ENCODE measurements at regions of chr10 and their contacts with region 1.

Region 1: DNA sequence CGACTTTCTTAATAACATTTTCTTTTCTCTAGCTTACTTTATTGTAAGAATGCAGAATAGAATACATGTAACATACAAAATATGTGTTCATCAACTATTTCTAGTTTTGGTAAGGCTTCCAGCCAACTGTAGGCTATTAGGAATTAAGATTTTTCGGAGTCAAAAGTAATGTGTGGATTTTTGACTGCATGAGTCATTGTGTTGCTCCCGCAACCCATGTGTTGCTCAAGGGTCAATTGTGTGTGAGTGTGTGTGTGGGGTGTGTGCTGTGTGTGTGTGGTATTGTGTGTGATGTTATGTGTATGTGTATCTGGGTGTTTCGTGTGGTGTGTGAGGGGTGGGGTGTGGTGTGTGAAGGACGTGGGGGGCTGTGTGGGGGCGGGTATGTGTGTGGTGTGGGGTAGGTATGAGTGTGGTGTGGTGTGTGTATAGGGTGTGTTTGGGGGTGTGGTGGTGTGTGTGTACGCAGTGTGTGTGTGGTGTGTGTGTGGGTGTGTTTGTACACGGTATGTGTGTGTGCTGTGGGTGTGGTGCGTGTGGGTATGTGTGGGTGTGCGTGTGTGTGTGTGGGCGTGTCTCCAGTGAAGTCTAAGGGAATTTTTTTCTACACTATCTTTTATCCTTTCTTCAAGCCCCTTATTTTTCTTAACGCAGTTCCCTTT is 60.5 kb downstream of the RSU1 start:
- DNase-seq: no peak
- ATAC-seq: no peak
- H3K4me3 ChIP-seq: no peak overlapping the region
- H3K27ac ChIP-seq: no peak overlapping the region
- H3K4me1 ChIP-seq: no peaks in the 10 kb centered on the region
- H3K27me3 ChIP-seq: no peaks in the 10 kb centered on the region
- CTCF ChIP-seq: no peak

Region 2: GRCh38 chr10:16686054-16686902 is 70.4 kb before region 1 on chr10:
- CTCF ChIA-PET with region 1: no interaction called
- POLR2A ChIA-PET with region 1: no interaction called
- intact Hi-C with region 1: no loop called
- DNase-seq: no peak
- ATAC-seq: no peak
- H3K4me3 ChIP-seq: no peak overlapping the region
- H3K27ac ChIP-seq: no peak overlapping the region
- H3K4me1 ChIP-seq: no peaks in the 10 kb centered on the region
- H3K27me3 ChIP-seq: no peaks in the 10 kb centered on the region
- CTCF ChIP-seq: no peak

Region 3: GRCh38 chr10:16699435-16700057 is 57.1 kb before region 1 on chr10:
- CTCF ChIA-PET with region 1: no interaction called
- POLR2A ChIA-PET with region 1: interaction called, 13 read pairs
- intact Hi-C with region 1: no loop called
- DNase-seq: no peak
- ATAC-seq: no peak
- H3K4me3 ChIP-seq: no peak overlapping the region
- H3K27ac ChIP-seq: no peak overlapping the region
- H3K4me1 ChIP-seq: no peaks in the 10 kb centered on the region
- H3K27me3 ChIP-seq: no peaks in the 10 kb centered on the region
- CTCF ChIP-seq: no peak

Region 4: GRCh38 chr10:16828114-16828568 is 71.4 kb after region 1 on chr10:
- CTCF ChIA-PET with region 1: no interaction called
- POLR2A ChIA-PET with region 1: no interaction called
- intact Hi-C with region 1: no loop called
- DNase-seq: peak; percentile 74
- ATAC-seq: peak; percentile 68
- H3K4me3 ChIP-seq: no peak overlapping the region
- H3K27ac ChIP-seq: peak overlapping the region; percentile 57
- H3K4me1 ChIP-seq: peaks cover 12% of the 10 kb centered on the region; the same call in 1 of the 2 replicates
- H3K27me3 ChIP-seq: no peaks in the 10 kb centered on the region
- CTCF ChIP-seq: peak; percentile 49; the same call in 1 of the 2 replicates

Region 5: GRCh38 chr10:17088118-17088806 is 331.6 kb after region 1 on chr10:
- CTCF ChIA-PET with region 1: no interaction called
- POLR2A ChIA-PET with region 1: no interaction called
- intact Hi-C with region 1: no loop called
- DNase-seq: peak; percentile 66
- ATAC-seq: peak; percentile 98
- H3K4me3 ChIP-seq: no peak overlapping the region
- H3K27ac ChIP-seq: peak overlapping the region; percentile 53
- H3K4me1 ChIP-seq: peaks cover 15% of the 10 kb centered on the region
- H3K27me3 ChIP-seq: no peaks in the 10 kb centered on the region
- CTCF ChIP-seq: no peak